Activated CD4-positive, alpha-beta memory T cell treated with anti-CD3 and anti-CD28 coated beads for 36 hours (primary cell): ENCODE measurements at regions of chr15 and their contacts with region 1.

Region 1: GRCh38 chr15:81274931-81275707 is 48.8 kb downstream of the STARD5 start:
- DNase-seq: peak; percentile 89
- H3K4me3 Mint-ChIP-seq: peak overlapping the region; percentile 3
- H3K27ac Mint-ChIP-seq: peak overlapping the region; percentile 23
- H3K4me1 Mint-ChIP-seq: peaks cover 22% of the 10 kb centered on the region
- H3K27me3 Mint-ChIP-seq: no peaks in the 10 kb centered on the region

Region 2: DNA sequence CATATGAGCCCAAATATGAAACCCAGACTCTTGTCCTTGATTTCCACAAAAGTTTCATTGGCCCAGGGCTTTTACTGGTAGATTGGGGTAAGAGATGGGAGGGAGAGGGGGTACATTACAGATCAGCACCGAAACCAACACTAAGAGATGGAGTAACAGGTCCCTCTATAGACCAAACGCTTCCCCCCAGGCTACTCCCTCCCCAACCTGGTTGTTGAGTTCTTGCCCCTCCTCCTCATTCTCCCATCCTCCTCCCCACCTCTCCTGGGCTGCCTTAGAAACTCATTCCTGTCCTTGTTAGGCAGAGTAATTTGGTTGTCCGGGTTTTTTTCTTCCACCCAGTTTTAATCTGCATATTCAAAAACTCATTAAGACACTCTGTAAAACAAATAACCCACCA is 359.6 kb before region 1 on chr15:
- CTCF ChIA-PET with region 1: no interaction called
- POLR2A ChIA-PET with region 1: no interaction called
- intact Hi-C with region 1: no loop called
- DNase-seq: no peak
- H3K4me3 Mint-ChIP-seq: no peak overlapping the region
- H3K27ac Mint-ChIP-seq: no peak overlapping the region
- H3K4me1 Mint-ChIP-seq: peaks cover 5% of the 10 kb centered on the region
- H3K27me3 Mint-ChIP-seq: no peaks in the 10 kb centered on the region

Region 3: DNA sequence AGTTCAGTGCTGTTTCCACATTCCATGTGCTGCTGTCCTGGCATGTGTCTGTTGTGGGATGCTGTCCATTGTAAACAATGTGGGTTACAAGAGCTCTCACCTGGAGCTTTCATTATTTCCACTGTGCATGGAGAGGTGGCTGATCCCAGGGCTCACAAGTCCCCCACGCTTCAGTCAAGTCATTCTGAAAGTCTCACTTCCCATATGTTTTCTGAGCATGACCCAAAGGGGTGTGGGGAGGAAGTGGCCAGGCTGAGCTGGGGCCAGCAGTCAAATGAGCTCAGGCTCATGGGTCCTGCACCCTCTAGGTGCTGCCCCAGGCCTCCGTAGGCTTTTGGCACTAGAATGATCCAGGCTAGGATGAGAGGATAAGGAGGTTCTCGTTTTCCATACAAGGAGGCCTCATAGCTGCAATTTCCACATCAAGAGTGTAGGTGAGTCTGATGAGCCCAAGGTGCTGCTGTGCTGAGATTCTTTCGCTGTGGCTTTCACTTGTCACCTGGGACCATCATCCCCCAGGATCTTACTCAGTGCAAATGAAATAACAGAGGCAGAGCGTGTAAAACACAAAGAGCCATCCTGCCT is 26.8 kb after region 1 on chr15:
- CTCF ChIA-PET with region 1: interaction called, 35 read pairs
- POLR2A ChIA-PET with region 1: interaction called, 3 read pairs
- intact Hi-C with region 1: loop called (anchors 1 kb)
- DNase-seq: peak; percentile 74
- H3K4me3 Mint-ChIP-seq: peak overlapping the region; percentile 99
- H3K27ac Mint-ChIP-seq: peak overlapping the region; percentile 99
- H3K4me1 Mint-ChIP-seq: peaks cover 77% of the 10 kb centered on the region
- H3K27me3 Mint-ChIP-seq: no peaks in the 10 kb centered on the region

Region 4: GRCh38 chr15:81323944-81324881 is 49.1 kb after region 1 on chr15 and contains the start of gene STARD5:
- CTCF ChIA-PET with region 1: interaction called, 11 read pairs
- POLR2A ChIA-PET with region 1: no interaction called
- intact Hi-C with region 1: no loop called
- DNase-seq: peak; percentile 98
- H3K4me3 Mint-ChIP-seq: peak within 1 kb of the TSS; percentile 100
- H3K27ac Mint-ChIP-seq: peak within 1 kb of the TSS; percentile 76
- H3K4me1 Mint-ChIP-seq: peaks cover 24% of the 10 kb centered on the region
- H3K27me3 Mint-ChIP-seq: no peaks in the 10 kb centered on the region
- total RNA-seq, gene STARD5: 7.3 to 9.1 TPM

Region 5: GRCh38 chr15:81336568-81336967 is 61.4 kb after region 1 on chr15:
- CTCF ChIA-PET with region 1: interaction called, 65 read pairs
- POLR2A ChIA-PET with region 1: no interaction called
- intact Hi-C with region 1: loop called (anchors 1 kb)
- DNase-seq: peak; percentile 51
- H3K4me3 Mint-ChIP-seq: no peak overlapping the region
- H3K27ac Mint-ChIP-seq: no peak overlapping the region
- H3K4me1 Mint-ChIP-seq: peaks cover 8% of the 10 kb centered on the region
- H3K27me3 Mint-ChIP-seq: no peaks in the 10 kb centered on the region

Region 6: DNA sequence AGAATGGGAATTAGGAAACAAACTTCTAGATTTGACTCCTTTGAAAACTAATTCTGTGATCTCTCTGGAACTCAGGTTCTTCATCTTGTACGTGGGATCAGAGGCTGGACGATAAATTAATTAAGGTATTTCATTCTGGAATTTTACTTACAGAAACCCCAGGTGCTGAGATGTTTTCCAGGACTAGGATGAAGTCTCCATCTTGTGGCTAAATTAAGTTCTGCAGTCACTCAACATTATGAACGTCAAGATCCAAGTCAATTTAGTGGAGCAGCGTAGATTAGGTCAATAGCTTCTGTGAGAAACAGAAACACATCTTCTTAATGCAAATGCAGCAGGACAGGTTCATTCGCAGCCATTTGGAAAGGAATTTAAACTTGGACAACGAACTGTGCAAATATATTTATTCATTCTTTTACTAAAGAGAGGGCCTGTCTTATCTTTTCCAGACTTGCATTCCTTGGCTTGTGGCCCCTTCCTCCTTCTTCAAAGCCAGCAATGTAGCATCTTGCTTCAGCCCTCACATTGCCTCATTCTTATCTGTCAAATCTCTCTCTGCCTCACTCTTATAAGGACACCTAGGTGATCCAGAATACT is 125.6 kb after region 1 on chr15:
- CTCF ChIA-PET with region 1: interaction called, 121 read pairs
- POLR2A ChIA-PET with region 1: no interaction called
- intact Hi-C with region 1: loop called (anchors 1 kb)
- DNase-seq: no peak
- H3K4me3 Mint-ChIP-seq: no peak overlapping the region
- H3K27ac Mint-ChIP-seq: no peak overlapping the region
- H3K4me1 Mint-ChIP-seq: no peaks in the 10 kb centered on the region
- H3K27me3 Mint-ChIP-seq: no peaks in the 10 kb centered on the region